Lower leg skin (tissue), 4 donors: ENCODE measurements at regions of chr15 and their contacts with region 1.

Region 1: GRCh38 chr15:43226436-43227305 is 5.9 kb upstream of the EPB42 start:
- DNase-seq: no peak
- H3K4me3 ChIP-seq: no peak overlapping the region
- CTCF ChIP-seq: no peak
- POLR2A ChIP-seq: no peak

Region 2: DNA sequence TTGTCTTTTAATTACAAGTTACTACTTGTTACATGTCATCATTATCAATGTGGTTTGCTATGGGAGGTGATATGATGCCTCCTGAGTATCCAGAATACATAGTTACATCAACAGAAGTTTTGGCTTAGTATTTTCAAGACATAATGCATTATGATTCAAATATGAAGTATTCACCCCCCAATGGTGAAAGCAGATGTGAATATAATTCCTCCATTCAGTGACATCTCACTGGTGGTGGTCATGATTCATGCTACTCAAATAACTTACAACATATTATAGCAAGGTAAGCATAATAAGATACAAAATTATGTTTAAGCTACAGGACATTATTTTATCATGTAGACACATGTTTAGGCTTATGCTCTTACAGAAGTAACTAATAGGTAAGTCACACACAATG is 271.2 kb before region 1 on chr15:
- intact Hi-C with region 1: no loop called
- DNase-seq: no peak
- H3K4me3 ChIP-seq: no peak overlapping the region
- CTCF ChIP-seq: no peak
- POLR2A ChIP-seq: no peak

Region 3: DNA sequence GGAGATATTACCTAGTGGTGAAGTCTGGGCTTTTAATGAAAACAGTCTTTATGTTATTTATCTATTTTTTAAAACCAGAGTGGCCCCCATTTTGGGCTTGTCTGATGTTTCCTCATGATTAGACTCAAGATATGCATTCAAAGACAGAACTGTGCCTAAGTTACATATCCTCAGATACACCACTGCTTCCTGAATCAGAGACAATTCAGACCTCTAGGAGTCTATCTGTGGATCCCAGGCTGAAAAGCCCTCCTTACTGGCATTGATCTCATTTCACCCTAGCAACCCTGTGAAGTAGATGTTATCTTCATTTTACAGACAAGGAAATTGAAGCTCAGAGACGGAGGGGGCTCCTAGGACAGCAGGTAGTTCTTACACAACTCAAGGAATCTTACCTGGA is 56.9 kb after region 1 on chr15:
- intact Hi-C with region 1: loop called (anchors 2 kb)
- DNase-seq: no peak
- H3K4me3 ChIP-seq: no peak overlapping the region
- CTCF ChIP-seq: no peak
- POLR2A ChIP-seq: no peak